Endothelial cell of umbilical vein (primary cell): ENCODE measurements at regions of chr6 and their contacts with region 1.

Region 1: DNA sequence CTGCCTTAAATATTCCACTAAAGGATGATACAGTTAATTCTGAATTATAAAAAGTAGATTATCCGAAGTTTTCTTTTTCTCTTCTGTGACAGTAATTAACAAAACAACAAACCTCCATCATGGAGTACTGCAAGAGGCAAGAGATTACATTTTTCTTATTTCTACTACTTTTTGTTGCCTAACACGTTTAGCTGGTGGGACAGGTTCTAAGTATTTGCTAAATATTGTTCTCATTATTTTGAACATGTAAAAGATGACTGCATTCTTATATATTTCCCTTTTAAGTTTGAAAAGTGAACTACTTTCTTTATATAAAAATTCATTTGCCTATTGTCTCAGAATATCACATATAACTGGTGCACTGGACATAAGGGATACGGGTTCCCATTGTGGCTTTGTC is 84.1 kb downstream of the IRAK1BP1 start:
- DNase-seq: no peak
- H3K4me3 ChIP-seq: no peak overlapping the region
- H3K27ac ChIP-seq: no peak overlapping the region
- H3K4me1 ChIP-seq: peaks cover 11% of the 10 kb centered on the region
- H3K27me3 ChIP-seq: no peaks in the 10 kb centered on the region
- CTCF ChIP-seq: no peak
- POLR2A ChIP-seq: no peak

Region 2: GRCh38 chr6:79152269-79152737 is 200.8 kb after region 1 on chr6:
- CTCF ChIA-PET with region 1: no interaction called
- POLR2A ChIA-PET with region 1: no interaction called
- dilution Hi-C with region 1: no loop called
- intact Hi-C with region 1: no loop called
- DNase-seq: no peak
- H3K4me3 ChIP-seq: no peak overlapping the region
- H3K27ac ChIP-seq: no peak overlapping the region
- H3K4me1 ChIP-seq: no peaks in the 10 kb centered on the region
- H3K27me3 ChIP-seq: no peaks in the 10 kb centered on the region
- CTCF ChIP-seq: no peak
- POLR2A ChIP-seq: no peak

Region 3: GRCh38 chr6:79494061-79494460 is 542.6 kb after region 1 on chr6:
- CTCF ChIA-PET with region 1: no interaction called
- POLR2A ChIA-PET with region 1: no interaction called
- dilution Hi-C with region 1: no loop called
- intact Hi-C with region 1: loop called (anchors 10 kb)
- DNase-seq: no peak
- H3K4me3 ChIP-seq: no peak overlapping the region
- H3K27ac ChIP-seq: no peak overlapping the region
- H3K4me1 ChIP-seq: no peaks in the 10 kb centered on the region
- H3K27me3 ChIP-seq: no peaks in the 10 kb centered on the region
- CTCF ChIP-seq: no peak
- POLR2A ChIP-seq: no peak